ENCODE measurements at regions of chr15 and their contacts with region 1.

Region 1: GRCh38 chr15:67937153-67937761 is 97.4 kb upstream of the RNU6-1 start:
- DNase-seq: no peak
- ATAC-seq: peak; percentile 16
- H3K4me3 ChIP-seq: no peak overlapping the region
- H3K27ac ChIP-seq: peak overlapping the region; percentile 82
- H3K4me1 ChIP-seq: peaks cover 28% of the 10 kb centered on the region
- H3K27me3 ChIP-seq: no peaks in the 10 kb centered on the region
- CTCF ChIP-seq: no peak
- EP300 ChIP-seq: no peak
- POLR2A ChIP-seq: no peak
- RAD21 ChIP-seq: no peak

Region 2: GRCh38 chr15:67820992-67821783 is 116.1 kb before region 1 on chr15:
- CTCF ChIA-PET with region 1: no interaction called
- POLR2A ChIA-PET with region 1: no interaction called
- RAD21 ChIA-PET with region 1: no interaction called
- SMC1A ChIA-PET with region 1: no interaction called
- in situ Hi-C with region 1: no loop called
- intact Hi-C with region 1: no loop called
- DNase-seq: no peak
- ATAC-seq: peak; percentile 64
- H3K4me3 ChIP-seq: no peak overlapping the region
- H3K27ac ChIP-seq: no peak overlapping the region
- H3K4me1 ChIP-seq: no peaks in the 10 kb centered on the region
- H3K27me3 ChIP-seq: peaks cover 21 to 32% of the 10 kb centered on the region in 2 experiments
- CTCF ChIP-seq: no peak
- EP300 ChIP-seq: no peak
- POLR2A ChIP-seq: no peak
- RAD21 ChIP-seq: no peak

Region 3: DNA sequence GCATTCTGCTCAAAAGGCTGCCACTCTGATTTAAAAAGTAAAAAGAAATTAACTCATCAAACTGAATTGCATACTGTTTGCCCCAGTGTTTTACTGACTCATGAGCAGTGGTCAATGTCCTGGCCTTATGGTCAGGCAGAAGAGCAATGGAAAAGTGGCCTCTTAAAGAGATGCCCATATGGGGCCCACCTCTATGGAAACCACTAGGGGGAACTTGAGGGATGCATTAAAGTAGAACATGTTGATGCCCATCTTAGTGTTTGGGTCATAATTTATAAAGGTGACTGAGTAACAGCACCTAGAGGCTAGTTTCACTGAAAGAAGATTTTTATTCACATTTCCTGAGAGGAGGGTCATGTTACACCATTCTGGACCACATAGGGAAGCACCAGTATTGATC is 30.9 kb before region 1 on chr15:
- CTCF ChIA-PET with region 1: interaction called, 3 read pairs
- POLR2A ChIA-PET with region 1: interaction called, 4 read pairs
- RAD21 ChIA-PET with region 1: interaction called, 9 read pairs
- SMC1A ChIA-PET with region 1: interaction called, 8 read pairs
- in situ Hi-C with region 1: no loop called
- intact Hi-C with region 1: loop called (anchors 1 kb)
- DNase-seq: no peak
- ATAC-seq: no peak
- H3K4me3 ChIP-seq: no peak overlapping the region
- H3K27ac ChIP-seq: no peak overlapping the region
- H3K4me1 ChIP-seq: peaks cover 25% of the 10 kb centered on the region
- H3K27me3 ChIP-seq: no peaks in the 10 kb centered on the region
- CTCF ChIP-seq: peak; percentile 6 to 32 (median 10); a peak in 1 of 6 replicates
- EP300 ChIP-seq: no peak
- POLR2A ChIP-seq: no peak
- RAD21 ChIP-seq: peak; percentile 22; the same call in 1 of the 2 replicates

Region 4: DNA sequence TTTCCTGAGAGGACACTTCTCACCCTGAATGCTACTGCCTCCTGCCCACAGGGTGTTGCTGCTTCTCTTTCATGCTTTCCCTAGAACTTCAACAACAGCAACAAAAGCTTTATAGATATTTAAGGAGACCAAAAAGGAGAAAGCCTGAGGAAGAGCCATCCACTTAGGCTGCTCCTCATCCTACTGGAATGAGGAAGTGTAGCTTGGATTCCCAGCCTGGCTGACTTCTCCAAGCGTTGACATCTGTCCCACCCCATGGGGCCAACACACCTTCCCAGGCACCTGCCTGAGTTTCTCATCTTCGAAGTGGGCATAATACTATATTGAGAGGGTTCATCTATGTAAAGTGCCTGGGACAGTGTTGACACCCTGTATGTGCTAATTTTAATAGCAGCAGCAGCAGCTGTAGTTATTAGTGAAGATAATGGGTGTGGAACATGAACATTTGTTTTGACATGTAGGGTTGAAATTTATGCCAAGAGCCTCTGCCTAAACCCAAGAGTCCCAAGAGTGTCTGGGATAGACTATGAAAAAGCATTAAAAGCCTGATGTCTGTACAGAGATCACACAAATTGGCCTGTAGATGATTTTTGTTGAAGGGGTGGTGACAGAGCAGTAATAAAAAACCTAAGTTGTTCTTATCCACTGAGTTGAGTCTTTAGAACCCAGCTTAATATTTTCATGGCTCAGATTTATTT is 20.3 kb after region 1 on chr15:
- CTCF ChIA-PET with region 1: interaction called, 4 read pairs
- POLR2A ChIA-PET with region 1: interaction called, 5 read pairs
- RAD21 ChIA-PET with region 1: interaction called, 13 read pairs
- SMC1A ChIA-PET with region 1: interaction called, 14 read pairs
- in situ Hi-C with region 1: no loop called
- intact Hi-C with region 1: no loop called
- DNase-seq: no peak
- ATAC-seq: no peak
- H3K4me3 ChIP-seq: no peak overlapping the region
- H3K27ac ChIP-seq: no peak overlapping the region
- H3K4me1 ChIP-seq: peaks cover 37% of the 10 kb centered on the region
- H3K27me3 ChIP-seq: no peaks in the 10 kb centered on the region
- CTCF ChIP-seq: no peak
- EP300 ChIP-seq: no peak
- POLR2A ChIP-seq: no peak
- RAD21 ChIP-seq: no peak

Region 5: DNA sequence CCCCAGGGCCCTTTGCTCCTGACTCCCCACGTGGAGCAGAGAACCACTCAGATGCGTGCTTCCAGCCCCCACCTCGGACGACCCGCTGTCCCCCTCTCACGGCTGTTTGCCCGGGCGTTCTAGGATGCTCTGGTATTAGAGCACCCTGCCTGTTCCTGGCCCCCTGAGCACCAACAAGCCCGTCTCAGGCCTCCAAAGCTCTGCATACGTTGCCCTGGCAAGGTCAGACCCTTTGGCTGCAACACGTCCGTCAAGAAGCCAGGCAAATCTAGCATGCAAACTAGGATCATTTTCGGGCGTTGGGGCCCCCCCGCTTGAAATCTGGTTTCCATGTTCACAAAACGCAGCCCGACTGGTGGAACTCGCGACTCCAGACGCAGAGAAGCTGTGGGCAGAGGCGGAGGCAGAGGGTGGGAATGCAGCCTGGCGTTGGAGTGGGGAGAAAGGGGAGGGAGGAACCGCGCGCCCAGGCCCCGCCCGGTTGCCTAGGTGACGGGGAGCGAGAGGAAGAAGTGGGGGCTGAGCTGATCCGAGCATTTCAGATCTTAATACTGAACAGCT is 30.7 kb after region 1 on chr15:
- CTCF ChIA-PET with region 1: no interaction called
- POLR2A ChIA-PET with region 1: interaction called, 8 read pairs
- RAD21 ChIA-PET with region 1: interaction called, 13 read pairs
- SMC1A ChIA-PET with region 1: interaction called, 5 read pairs
- in situ Hi-C with region 1: no loop called
- intact Hi-C with region 1: no loop called
- DNase-seq: no peak
- ATAC-seq: peak; percentile 94
- H3K4me3 ChIP-seq: peak overlapping the region; percentile 58
- H3K27ac ChIP-seq: no peak overlapping the region
- H3K4me1 ChIP-seq: peaks cover 14% of the 10 kb centered on the region
- H3K27me3 ChIP-seq: no peaks in the 10 kb centered on the region
- CTCF ChIP-seq: no peak
- EP300 ChIP-seq: no peak
- POLR2A ChIP-seq: no peak
- RAD21 ChIP-seq: no peak

Measured in GM12878 (cell line).